Activated CD4-positive, alpha-beta T cell treated with anti-CD3 and anti-CD28 coated beads for 36 hours (primary cell): ENCODE measurements at regions of chr2 and their contacts with region 1.

Region 1: DNA sequence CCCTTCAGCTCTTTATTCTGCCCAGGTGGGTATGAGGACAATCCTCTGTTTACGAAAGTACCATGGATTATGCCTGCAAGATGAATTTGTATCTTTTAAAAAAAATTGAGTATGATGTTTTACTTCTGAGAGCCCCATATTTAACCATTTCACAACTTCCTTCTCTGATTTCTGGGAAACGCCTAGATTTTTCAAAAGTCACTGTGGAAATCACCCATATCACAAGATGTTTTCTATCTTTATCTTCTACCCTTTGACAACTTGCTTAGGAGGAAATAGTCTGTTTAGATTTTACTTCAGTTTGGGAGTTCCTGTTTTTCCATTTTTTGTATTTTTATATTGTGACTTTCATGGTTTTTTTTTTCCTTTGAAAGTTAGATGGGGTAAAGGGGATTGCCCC is 53.0 kb downstream of the ICOS start:
- DNase-seq: no peak
- ATAC-seq: no peak
- H3K4me3 Mint-ChIP-seq: no peak overlapping the region
- H3K27ac Mint-ChIP-seq: peak overlapping the region; percentile 87
- H3K4me1 Mint-ChIP-seq: peaks cover 8% of the 10 kb centered on the region
- H3K27me3 Mint-ChIP-seq: no peaks in the 10 kb centered on the region

Region 2: DNA sequence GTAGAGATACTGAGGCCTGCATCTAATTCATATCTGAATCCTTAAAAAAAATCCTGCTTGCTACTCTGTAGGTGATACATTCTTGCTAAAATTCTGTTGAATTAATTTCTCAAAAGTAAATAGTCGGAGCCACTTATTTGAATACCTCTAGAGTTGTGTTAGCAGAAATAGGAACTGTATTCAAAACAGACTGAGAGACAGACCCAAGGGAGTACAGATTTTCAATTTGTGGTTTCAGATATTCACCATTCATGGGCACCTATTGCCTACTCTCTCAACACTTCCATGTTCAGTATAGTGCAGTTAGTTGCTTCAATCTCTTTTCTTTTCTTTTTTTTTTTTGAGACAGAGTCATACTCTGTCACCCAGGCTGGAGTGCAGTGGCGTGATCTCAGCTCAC is 168.6 kb before region 1 on chr2:
- CTCF ChIA-PET with region 1: no interaction called
- POLR2A ChIA-PET with region 1: no interaction called
- intact Hi-C with region 1: no loop called
- DNase-seq: no peak
- ATAC-seq: no peak
- H3K4me3 Mint-ChIP-seq: no peak overlapping the region
- H3K27ac Mint-ChIP-seq: no peak overlapping the region
- H3K4me1 Mint-ChIP-seq: peaks cover 34% of the 10 kb centered on the region
- H3K27me3 Mint-ChIP-seq: no peaks in the 10 kb centered on the region

Region 3: DNA sequence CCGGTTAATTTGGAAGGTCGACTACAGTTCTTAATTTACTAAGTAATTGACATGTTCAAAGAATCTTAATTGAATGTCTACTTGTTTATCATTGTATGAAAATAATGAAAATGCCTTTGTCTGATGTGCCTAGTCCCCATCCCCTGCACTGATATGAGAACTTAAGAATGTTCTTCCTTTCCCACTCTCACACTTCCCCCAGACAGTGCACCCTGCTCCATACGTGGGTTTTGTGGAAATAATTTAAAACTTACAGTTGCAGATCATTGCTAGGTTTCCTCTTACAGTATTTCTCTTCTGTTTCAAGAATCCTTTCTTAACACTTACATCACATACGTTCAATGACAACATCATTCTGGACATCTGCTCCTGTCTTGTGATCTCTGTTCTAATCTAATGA is 49.5 kb before region 1 on chr2:
- CTCF ChIA-PET with region 1: interaction called, 6 read pairs
- POLR2A ChIA-PET with region 1: interaction called, 3 read pairs
- intact Hi-C with region 1: loop called in 1 of 2 experiments (anchors 2 kb)
- DNase-seq: no peak
- ATAC-seq: peak; percentile 7
- H3K4me3 Mint-ChIP-seq: peak overlapping the region; percentile 87
- H3K27ac Mint-ChIP-seq: peak overlapping the region; percentile 98
- H3K4me1 Mint-ChIP-seq: peaks cover 53% of the 10 kb centered on the region
- H3K27me3 Mint-ChIP-seq: no peaks in the 10 kb centered on the region

Region 4: DNA sequence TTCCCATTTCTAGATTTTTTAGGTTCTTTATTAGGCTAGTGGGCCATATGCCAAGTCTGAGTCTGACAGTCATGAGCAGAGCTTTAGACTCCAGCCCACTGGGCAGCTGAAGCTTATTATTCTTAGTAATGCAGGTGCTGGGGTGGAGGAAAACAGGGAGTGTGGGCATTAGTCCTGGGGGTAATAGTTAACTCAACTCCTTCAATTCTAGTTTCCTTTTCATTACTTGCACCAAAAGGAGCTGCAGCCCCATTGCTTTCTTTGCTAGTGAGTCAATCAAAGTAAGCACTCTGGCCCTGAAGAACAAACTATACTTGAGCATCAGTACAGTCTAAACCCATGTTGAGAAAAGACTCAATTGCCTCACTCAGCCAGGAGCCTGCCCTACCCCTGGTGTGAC is 17.5 kb before region 1 on chr2:
- CTCF ChIA-PET with region 1: interaction called, 7 read pairs
- POLR2A ChIA-PET with region 1: interaction called, 9 read pairs
- intact Hi-C with region 1: loop called in 1 of 2 experiments (anchors 1 kb)
- DNase-seq: no peak
- ATAC-seq: no peak
- H3K4me3 Mint-ChIP-seq: no peak overlapping the region
- H3K27ac Mint-ChIP-seq: no peak overlapping the region
- H3K4me1 Mint-ChIP-seq: peaks cover 27% of the 10 kb centered on the region
- H3K27me3 Mint-ChIP-seq: no peaks in the 10 kb centered on the region